K562 (cell line): ENCODE measurements at regions of chr14 and their contacts with region 1.

Region 1: GRCh38 chr14:102694530-102695166 is 82.6 kb upstream of the TRAF3 start:
- DNase-seq: peak; percentile 54 to 73 (median 55)
- ATAC-seq: peak; percentile 77
- H3K4me3 ChIP-seq: no peak overlapping the region
- H3K27ac ChIP-seq: no peak overlapping the region
- H3K4me1 ChIP-seq: peaks cover 10 to 20% of the 10 kb centered on the region in 2 experiments; a peak in 3 of 5 replicates
- H3K27me3 ChIP-seq: no peaks in the 10 kb centered on the region
- CTCF ChIP-seq: peak; percentile 37 to 63 (median 48); a peak in 5 of 6 replicates
- EP300 ChIP-seq: no peak
- POLR2A ChIP-seq: no peak
- RAD21 ChIP-seq: peak; percentile 48; a peak in 3 of 4 replicates

Region 2: GRCh38 chr14:102917469-102918211 is 223.0 kb after region 1 on chr14:
- CTCF ChIA-PET with region 1: interaction called, 8 read pairs
- POLR2A ChIA-PET with region 1: no interaction called
- in situ Hi-C with region 1: no loop called
- intact Hi-C with region 1: loop called (anchors 5 kb)
- DNase-seq: peak; percentile 55 to 72 (median 58)
- ATAC-seq: peak; percentile 72
- H3K4me3 ChIP-seq: no peak overlapping the region
- H3K27ac ChIP-seq: no peak overlapping the region
- H3K4me1 ChIP-seq: peaks cover 0 to 16% of the 10 kb centered on the region in 2 experiments; a peak in 2 of 5 replicates
- H3K27me3 ChIP-seq: peaks cover 0 to 8% of the 10 kb centered on the region in 2 experiments; a peak in 1 of 5 replicates
- CTCF ChIP-seq: peak; percentile 68 to 81 (median 69)
- EP300 ChIP-seq: no peak
- POLR2A ChIP-seq: no peak
- RAD21 ChIP-seq: peak; percentile 48 to 82

Region 3: DNA sequence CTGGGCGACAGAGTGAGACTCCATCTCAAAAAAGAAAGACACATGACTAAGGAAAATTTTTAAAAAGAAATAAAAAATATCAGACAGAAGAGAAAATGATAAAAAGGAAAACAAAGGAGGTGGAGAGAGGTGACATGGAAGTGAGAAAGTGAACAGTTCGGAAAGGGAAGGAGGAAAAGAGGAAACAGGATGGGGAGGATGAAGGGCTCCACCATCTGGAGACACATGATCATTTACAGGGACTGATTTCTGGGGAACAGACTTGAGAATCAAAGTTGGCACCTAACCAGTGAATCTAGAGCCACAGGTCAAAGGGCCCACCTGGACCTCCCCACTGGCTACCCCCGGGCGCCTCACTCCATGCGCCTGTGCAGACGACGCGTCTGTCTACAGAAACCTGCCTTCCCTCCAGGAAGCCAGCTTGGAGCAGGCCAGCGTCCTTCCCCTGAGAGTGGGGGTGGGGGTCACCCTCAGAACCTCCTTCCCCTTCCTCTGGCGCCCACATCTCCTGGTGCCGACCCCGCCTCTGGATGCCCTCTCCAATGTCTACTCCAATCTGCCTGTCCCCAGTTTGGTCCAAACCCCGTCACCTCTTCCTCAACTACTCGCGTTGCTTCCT is 288.3 kb after region 1 on chr14:
- CTCF ChIA-PET with region 1: no interaction called
- POLR2A ChIA-PET with region 1: no interaction called
- in situ Hi-C with region 1: no loop called
- intact Hi-C with region 1: no loop called
- DNase-seq: no peak
- ATAC-seq: no peak
- H3K4me3 ChIP-seq: no peak overlapping the region
- H3K27ac ChIP-seq: no peak overlapping the region
- H3K4me1 ChIP-seq: no peaks in the 10 kb centered on the region
- H3K27me3 ChIP-seq: no peaks in the 10 kb centered on the region
- CTCF ChIP-seq: peak in 1 of 3 experiments; percentile 34; a peak in 1 of 6 replicates
- EP300 ChIP-seq: no peak
- POLR2A ChIP-seq: no peak
- RAD21 ChIP-seq: no peak